ENCODE measurements at regions of chr1 and their contacts with region 1.

Region 1: DNA sequence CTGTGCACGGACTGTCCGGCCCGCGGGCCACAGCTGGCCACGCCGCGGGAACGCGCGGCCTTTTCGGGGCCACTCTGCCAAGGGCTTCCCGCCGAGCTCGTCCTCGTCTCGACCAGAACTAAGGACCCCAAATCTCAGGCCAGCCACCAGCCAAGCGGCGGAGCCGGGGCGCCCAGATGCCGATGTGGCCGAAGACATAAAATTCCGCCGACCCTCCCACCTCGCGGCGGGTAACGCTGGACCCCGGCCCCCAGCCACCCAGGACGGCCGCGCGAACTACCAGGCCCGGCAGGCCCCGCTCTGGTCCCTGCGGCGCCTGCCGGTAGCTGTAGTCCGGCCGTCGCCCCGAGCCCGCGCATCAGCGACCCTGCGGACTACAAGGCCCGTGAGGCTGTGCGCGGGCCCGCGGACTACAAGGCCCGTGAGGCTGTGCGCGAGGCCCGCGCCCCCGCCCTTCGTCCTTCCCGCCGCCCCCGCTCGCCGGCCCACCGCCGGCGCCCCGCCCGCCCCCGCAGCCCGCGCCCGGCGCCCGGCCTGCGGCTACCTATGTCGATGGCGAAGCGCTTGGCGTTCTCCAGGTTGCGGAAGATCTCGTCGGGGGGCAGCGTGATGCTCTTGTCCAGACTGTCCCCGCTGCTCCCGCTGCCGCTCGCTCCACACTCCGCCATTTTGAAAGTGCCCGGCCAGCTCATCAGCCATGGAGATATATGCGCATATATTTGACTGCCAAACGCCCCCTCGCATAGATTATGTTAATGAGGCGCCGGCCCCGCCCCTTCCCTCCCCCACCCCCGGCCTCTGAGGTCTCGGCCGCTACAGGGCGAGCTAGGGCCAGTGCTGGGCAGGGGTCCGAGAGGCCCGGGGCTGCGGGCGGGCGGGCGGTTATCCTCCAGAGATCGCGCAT is at the start of gene PANK4:
- DNase-seq: peak; percentile 86 to 90 (median 89)
- H3K4me3 ChIP-seq: peak within 1 kb of the TSS; percentile 31 to 96
- H3K4me3 Mint-ChIP-seq: peak within 1 kb of the TSS; percentile 89 to 97 (median 95)
- H3K27ac ChIP-seq: peak within 1 kb of the TSS; percentile 86
- H3K27ac Mint-ChIP-seq: peak within 1 kb of the TSS; percentile 86 to 98 (median 97)
- H3K4me1 ChIP-seq: peaks cover 64% of the 10 kb centered on the region
- H3K4me1 Mint-ChIP-seq: peaks cover 27 to 63% (median 47%) of the 10 kb centered on the region in 4 donors
- H3K27me3 ChIP-seq: peaks cover 9% of the 10 kb centered on the region
- H3K27me3 Mint-ChIP-seq: peaks cover 5 to 11% of the 10 kb centered on the region in 2 donors
- total RNA-seq, gene PANK4: 88.9 to 93.7 TPM

Region 2: DNA sequence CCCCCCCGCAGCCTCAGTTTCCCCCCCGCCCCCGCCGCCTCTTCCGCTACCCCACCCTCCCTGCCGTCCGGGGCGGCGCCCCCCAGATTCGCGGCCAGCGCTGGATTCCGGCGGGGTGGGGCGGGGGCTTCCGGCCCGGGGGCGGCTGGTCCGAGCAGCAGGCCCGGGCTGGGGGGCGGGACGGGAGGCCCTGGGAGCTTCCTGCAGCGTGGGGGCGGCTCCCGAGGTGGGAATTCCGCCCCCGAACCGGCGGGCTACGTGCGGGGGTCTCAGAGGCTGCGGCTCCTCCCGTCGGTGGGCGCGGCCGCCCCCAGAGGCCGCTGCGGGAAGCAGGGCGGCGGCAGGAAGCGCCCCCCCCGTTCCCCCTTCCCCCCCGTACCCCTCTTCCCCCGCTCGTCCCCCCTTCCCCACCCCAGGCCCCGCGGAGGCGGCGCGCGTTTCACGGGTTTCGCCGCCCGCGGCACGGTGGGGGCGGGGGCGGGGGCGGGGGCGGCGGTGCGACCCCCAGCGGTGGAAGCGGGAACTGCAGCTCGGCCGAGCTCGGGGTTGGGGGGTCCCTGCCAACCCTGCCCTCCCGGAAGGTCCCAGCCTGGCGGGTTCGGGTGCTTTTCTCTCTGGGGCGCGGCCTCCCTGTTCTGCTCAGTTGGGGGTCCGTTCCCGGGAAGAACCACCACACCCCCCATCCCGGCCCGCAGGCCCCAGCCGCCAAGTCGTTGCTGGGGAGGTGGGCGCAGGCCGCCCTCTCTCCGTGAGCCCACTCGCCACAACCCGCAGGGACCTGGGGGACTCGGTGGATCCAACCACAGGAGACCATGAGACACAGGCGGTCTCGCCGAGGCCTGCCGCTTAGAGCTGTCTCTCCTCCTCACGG is 211.1 kb before region 1 on chr1:
- CTCF ChIA-PET with region 1: no interaction called
- POLR2A ChIA-PET with region 1: no interaction called
- intact Hi-C with region 1: no loop called
- DNase-seq: peak; percentile 65 to 71 (median 67)
- H3K4me3 ChIP-seq: no peak overlapping the region
- H3K4me3 Mint-ChIP-seq: peak overlapping the region in 6 of 8 donors; percentile 21 to 70 (median 55)
- H3K27ac ChIP-seq: peak overlapping the region; percentile 63
- H3K27ac Mint-ChIP-seq: peak overlapping the region in 5 of 7 donors; percentile 36 to 79 (median 74)
- H3K4me1 ChIP-seq: peaks cover 42% of the 10 kb centered on the region
- H3K4me1 Mint-ChIP-seq: peaks cover 2 to 9% (median 4%) of the 10 kb centered on the region in 4 donors
- H3K27me3 ChIP-seq: no peaks in the 10 kb centered on the region
- H3K27me3 Mint-ChIP-seq: no peaks in the 10 kb centered on the region

Region 3: DNA sequence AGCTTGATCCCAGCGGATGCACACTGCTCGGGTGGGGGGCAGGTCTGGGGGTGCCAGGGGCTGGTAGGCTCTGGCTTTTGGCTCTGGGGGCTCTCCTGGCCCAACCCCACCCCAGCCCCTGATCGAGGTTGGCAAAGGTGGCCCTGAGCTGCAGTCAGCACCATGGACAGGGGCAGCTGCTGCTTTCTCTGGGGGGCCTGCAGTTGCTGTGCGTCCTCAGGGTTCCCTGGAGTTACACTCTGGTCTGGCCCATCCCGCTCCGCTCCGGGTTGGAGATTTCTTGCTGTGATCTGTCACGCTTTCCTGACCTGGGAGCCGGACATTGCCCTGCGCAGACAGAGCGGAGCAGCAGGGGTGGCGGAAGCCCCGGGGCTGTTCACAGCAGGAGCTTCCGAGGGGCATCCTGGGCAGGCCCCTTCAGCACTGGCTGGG is 58.1 kb before region 1 on chr1:
- CTCF ChIA-PET with region 1: no interaction called
- POLR2A ChIA-PET with region 1: no interaction called
- intact Hi-C with region 1: no loop called
- DNase-seq: peak in 4 of 5 donors; percentile 27 to 42 (median 36)
- H3K4me3 ChIP-seq: no peak overlapping the region
- H3K4me3 Mint-ChIP-seq: no peak overlapping the region
- H3K27ac ChIP-seq: no peak overlapping the region
- H3K27ac Mint-ChIP-seq: no peak overlapping the region
- H3K4me1 ChIP-seq: peaks cover 14% of the 10 kb centered on the region
- H3K4me1 Mint-ChIP-seq: peaks cover 0 to 8% (median under 1%) of the 10 kb centered on the region in 4 donors
- H3K27me3 ChIP-seq: no peaks in the 10 kb centered on the region
- H3K27me3 Mint-ChIP-seq: no peaks in the 10 kb centered on the region

Region 4: GRCh38 chr1:2486041-2486440 is 40.1 kb before region 1 on chr1:
- CTCF ChIA-PET with region 1: no interaction called
- POLR2A ChIA-PET with region 1: no interaction called
- intact Hi-C with region 1: no loop called
- DNase-seq: no peak
- H3K4me3 ChIP-seq: no peak overlapping the region
- H3K4me3 Mint-ChIP-seq: no peak overlapping the region
- H3K27ac ChIP-seq: no peak overlapping the region
- H3K27ac Mint-ChIP-seq: no peak overlapping the region
- H3K4me1 ChIP-seq: no peaks in the 10 kb centered on the region
- H3K4me1 Mint-ChIP-seq: peaks cover 2 to 5% (median 4%) of the 10 kb centered on the region in 4 donors
- H3K27me3 ChIP-seq: no peaks in the 10 kb centered on the region
- H3K27me3 Mint-ChIP-seq: no peaks in the 10 kb centered on the region

Region 5: DNA sequence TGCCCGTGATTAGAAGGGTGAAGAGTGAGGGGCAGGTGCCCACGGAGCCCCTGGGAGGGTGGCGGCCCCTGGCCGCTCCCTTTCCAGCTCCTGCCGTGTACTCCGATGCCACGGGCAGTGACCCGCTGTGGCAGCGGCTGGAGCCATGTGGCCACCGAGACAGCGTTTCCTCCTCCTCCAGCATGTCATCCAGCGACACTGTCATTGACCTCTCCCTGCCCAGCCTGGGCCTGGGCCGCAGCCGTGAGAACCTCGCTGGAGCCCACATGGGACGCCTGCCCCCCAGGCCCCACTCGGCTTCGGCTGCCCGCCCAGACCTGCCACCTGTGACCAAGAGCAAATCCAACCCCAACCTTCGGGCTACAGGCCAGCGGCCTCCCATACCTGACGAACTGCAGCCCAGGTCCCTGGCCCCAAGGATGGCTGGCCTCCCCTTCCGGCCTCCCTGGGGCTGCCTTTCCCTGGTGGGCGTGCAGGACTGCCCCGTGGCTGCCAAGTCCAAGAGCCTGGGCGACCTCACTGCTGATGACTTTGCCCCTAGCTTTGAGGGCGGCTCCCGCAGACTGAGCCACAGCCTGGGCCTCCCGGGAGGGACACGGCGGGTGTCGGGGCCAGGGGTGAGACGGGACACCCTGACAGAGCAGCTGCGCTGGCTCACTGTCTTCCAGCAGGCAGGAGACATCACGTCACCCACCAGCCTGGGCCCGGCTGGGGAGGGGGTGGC is 21.8 kb before region 1 on chr1:
- CTCF ChIA-PET with region 1: interaction called, 3 read pairs
- POLR2A ChIA-PET with region 1: interaction called, 11 read pairs
- intact Hi-C with region 1: no loop called
- DNase-seq: no peak
- H3K4me3 ChIP-seq: no peak overlapping the region
- H3K4me3 Mint-ChIP-seq: no peak overlapping the region
- H3K27ac ChIP-seq: no peak overlapping the region
- H3K27ac Mint-ChIP-seq: no peak overlapping the region
- H3K4me1 ChIP-seq: peaks cover 11% of the 10 kb centered on the region
- H3K4me1 Mint-ChIP-seq: peaks cover 5 to 13% (median 8%) of the 10 kb centered on the region in 4 donors
- H3K27me3 ChIP-seq: no peaks in the 10 kb centered on the region
- H3K27me3 Mint-ChIP-seq: no peaks in the 10 kb centered on the region

Region 6: DNA sequence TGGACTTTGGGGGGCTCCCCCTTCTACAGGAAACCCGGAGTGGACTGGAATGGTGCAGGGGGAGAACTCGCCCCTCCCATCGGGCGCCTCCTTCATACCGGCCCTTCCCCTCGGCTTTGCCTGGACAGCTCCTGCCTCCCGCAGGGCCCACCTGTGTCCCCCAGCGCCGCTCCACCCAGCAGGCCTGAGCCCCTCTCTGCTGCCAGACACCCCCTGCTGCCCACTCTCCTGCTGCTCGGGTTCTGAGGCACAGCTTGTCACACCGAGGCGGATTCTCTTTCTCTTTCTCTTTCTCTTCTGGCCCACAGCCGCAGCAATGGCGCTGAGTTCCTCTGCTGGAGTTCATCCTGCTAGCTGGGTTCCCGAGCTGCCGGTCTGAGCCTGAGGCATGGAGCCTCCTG is 30.1 kb after region 1 on chr1 and contains the start of gene TNFRSF14:
- CTCF ChIA-PET with region 1: interaction called, 4 read pairs
- POLR2A ChIA-PET with region 1: interaction called, 33 read pairs
- intact Hi-C with region 1: no loop called
- DNase-seq: peak; percentile 77 to 88 (median 78)
- H3K4me3 ChIP-seq: peak within 1 kb of the TSS; percentile 95 to 98
- H3K4me3 Mint-ChIP-seq: peak within 1 kb of the TSS; percentile 92 to 99 (median 96)
- H3K27ac ChIP-seq: peak within 1 kb of the TSS; percentile 98
- H3K27ac Mint-ChIP-seq: peak within 1 kb of the TSS; percentile 95 to 100 (median 98)
- H3K4me1 ChIP-seq: peaks cover 43% of the 10 kb centered on the region
- H3K4me1 Mint-ChIP-seq: peaks cover 9 to 50% (median 30%) of the 10 kb centered on the region in 4 donors
- H3K27me3 ChIP-seq: no peaks in the 10 kb centered on the region
- H3K27me3 Mint-ChIP-seq: no peaks in the 10 kb centered on the region
- total RNA-seq, gene TNFRSF14: 170 to 173 TPM

Region 7: GRCh38 chr1:2575801-2576663 is 49.9 kb after region 1 on chr1:
- CTCF ChIA-PET with region 1: interaction called, 3 read pairs
- POLR2A ChIA-PET with region 1: interaction called, 10 read pairs
- intact Hi-C with region 1: loop called (anchors 1 kb)
- DNase-seq: peak in 1 of 5 donors; percentile 28
- H3K4me3 ChIP-seq: no peak overlapping the region
- H3K4me3 Mint-ChIP-seq: peak overlapping the region in 3 of 8 donors; percentile 16 to 59 (median 30)
- H3K27ac ChIP-seq: peak overlapping the region; percentile 99
- H3K27ac Mint-ChIP-seq: peak overlapping the region in 6 of 7 donors; percentile 13 to 98 (median 70)
- H3K4me1 ChIP-seq: peaks cover 47% of the 10 kb centered on the region
- H3K4me1 Mint-ChIP-seq: peaks cover 16 to 59% (median 32%) of the 10 kb centered on the region in 4 donors
- H3K27me3 ChIP-seq: no peaks in the 10 kb centered on the region
- H3K27me3 Mint-ChIP-seq: no peaks in the 10 kb centered on the region

Region 8: GRCh38 chr1:3763351-3764125 is 1237.4 kb after region 1 on chr1:
- CTCF ChIA-PET with region 1: no interaction called
- POLR2A ChIA-PET with region 1: no interaction called
- intact Hi-C with region 1: no loop called
- DNase-seq: no peak
- H3K4me3 ChIP-seq: no peak overlapping the region
- H3K4me3 Mint-ChIP-seq: no peak overlapping the region
- H3K27ac ChIP-seq: no peak overlapping the region
- H3K27ac Mint-ChIP-seq: no peak overlapping the region
- H3K4me1 ChIP-seq: no peaks in the 10 kb centered on the region
- H3K4me1 Mint-ChIP-seq: no peaks in the 10 kb centered on the region
- H3K27me3 ChIP-seq: no peaks in the 10 kb centered on the region
- H3K27me3 Mint-ChIP-seq: peaks cover 18 to 22% of the 10 kb centered on the region in 2 donors